PC-3 (cell line): ENCODE measurements at regions of chr1 and their contacts with region 1.

Region 1: GRCh38 chr1:12434174-12434573 is 183.8 kb downstream of the DHRS3 start:
- DNase-seq: peak; percentile 76
- ATAC-seq: peak; percentile 84
- H3K4me3 ChIP-seq: no peak overlapping the region
- H3K27ac ChIP-seq: peak overlapping the region; percentile 39
- H3K4me1 ChIP-seq: peaks cover 59% of the 10 kb centered on the region
- H3K27me3 ChIP-seq: no peaks in the 10 kb centered on the region
- CTCF ChIP-seq: no peak

Region 2: DNA sequence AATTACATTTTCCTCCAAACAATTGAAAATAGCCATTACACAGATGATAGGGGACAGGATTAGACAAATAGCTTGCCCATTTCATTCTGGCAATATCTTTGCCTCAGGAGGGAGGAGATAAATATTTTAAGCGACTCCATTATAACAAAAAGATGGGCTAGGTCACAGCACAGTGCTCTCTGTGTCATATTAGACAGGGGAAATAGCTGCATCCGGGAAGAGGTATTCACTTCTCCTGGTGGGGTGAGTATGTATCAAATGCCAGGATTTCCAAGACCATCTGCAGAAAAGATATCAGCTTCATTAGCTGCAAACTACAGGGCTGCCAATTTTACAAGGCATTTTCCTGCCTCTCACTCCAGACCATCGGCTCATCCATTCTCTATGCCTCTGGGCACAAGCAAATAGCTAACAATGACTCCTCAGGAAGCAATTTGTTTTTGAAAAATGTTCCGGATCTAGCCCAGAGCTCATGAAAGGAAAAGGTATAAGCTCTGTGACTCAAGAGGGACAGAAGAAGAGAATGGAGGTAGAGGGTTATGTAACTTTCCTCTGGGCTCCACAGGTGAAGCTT is 1286.9 kb before region 1 on chr1:
- CTCF ChIA-PET with region 1: interaction called, 14 read pairs
- POLR2A ChIA-PET with region 1: no interaction called
- intact Hi-C with region 1: no loop called
- DNase-seq: peak; percentile 93
- ATAC-seq: peak; percentile 92
- H3K4me3 ChIP-seq: no peak overlapping the region
- H3K27ac ChIP-seq: peak overlapping the region; percentile 84
- H3K4me1 ChIP-seq: peaks cover 41% of the 10 kb centered on the region
- H3K27me3 ChIP-seq: no peaks in the 10 kb centered on the region
- CTCF ChIP-seq: no peak

Region 3: DNA sequence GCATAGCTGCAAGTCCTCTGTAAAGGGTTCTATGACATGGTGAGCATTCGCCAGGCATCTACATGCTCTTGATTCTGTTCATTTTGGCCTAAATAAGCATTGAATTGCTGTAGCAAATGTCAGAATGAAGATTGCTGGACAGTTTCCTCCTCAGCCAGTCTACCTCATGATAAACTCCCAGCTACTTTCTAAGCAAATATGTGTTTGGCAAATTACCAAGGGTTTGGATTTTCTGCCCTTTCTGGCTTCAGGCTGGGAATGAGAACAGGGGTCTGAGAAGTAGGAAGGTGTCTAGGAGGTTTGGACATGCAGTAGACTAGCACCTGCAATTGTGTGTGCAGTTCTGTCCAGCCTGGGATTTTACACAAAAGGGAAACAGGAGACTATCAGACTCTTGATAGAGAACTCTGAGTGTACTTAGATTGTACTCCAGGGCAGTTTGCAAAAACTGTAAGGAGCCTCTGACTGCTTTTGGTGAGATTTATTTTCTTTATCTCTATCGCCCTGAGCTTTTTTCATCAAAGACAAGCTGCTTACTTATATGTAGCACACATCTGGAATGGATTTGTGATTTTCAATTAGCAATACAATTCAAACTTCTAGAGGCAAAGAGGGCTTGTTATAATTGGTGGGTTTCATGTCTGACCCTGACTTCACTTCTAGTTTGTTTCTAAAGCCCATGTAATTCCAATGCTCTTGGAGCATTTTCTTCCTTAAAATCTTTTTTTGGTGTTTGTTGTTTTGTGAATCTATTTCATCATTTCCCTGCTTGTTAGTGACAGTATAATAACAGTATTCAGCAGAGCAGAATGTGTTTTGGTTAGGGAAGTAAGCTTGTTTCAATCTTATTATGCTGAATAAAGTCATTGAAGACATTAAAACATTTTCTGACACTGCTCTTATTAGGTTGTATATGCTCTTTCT is 53.6 kb before region 1 on chr1:
- CTCF ChIA-PET with region 1: interaction called, 3 read pairs
- POLR2A ChIA-PET with region 1: no interaction called
- intact Hi-C with region 1: loop called (anchors 2 kb)
- DNase-seq: peak; percentile 61
- ATAC-seq: peak; percentile 27
- H3K4me3 ChIP-seq: peak overlapping the region; percentile 39
- H3K27ac ChIP-seq: peak overlapping the region; percentile 99
- H3K4me1 ChIP-seq: peaks cover 54% of the 10 kb centered on the region
- H3K27me3 ChIP-seq: no peaks in the 10 kb centered on the region
- CTCF ChIP-seq: no peak

Region 4: GRCh38 chr1:12400027-12400693 is 34.0 kb before region 1 on chr1:
- CTCF ChIA-PET with region 1: no interaction called
- POLR2A ChIA-PET with region 1: no interaction called
- intact Hi-C with region 1: no loop called
- DNase-seq: no peak
- ATAC-seq: no peak
- H3K4me3 ChIP-seq: no peak overlapping the region
- H3K27ac ChIP-seq: no peak overlapping the region
- H3K4me1 ChIP-seq: peaks cover 15% of the 10 kb centered on the region
- H3K27me3 ChIP-seq: no peaks in the 10 kb centered on the region
- CTCF ChIP-seq: no peak

Region 5: DNA sequence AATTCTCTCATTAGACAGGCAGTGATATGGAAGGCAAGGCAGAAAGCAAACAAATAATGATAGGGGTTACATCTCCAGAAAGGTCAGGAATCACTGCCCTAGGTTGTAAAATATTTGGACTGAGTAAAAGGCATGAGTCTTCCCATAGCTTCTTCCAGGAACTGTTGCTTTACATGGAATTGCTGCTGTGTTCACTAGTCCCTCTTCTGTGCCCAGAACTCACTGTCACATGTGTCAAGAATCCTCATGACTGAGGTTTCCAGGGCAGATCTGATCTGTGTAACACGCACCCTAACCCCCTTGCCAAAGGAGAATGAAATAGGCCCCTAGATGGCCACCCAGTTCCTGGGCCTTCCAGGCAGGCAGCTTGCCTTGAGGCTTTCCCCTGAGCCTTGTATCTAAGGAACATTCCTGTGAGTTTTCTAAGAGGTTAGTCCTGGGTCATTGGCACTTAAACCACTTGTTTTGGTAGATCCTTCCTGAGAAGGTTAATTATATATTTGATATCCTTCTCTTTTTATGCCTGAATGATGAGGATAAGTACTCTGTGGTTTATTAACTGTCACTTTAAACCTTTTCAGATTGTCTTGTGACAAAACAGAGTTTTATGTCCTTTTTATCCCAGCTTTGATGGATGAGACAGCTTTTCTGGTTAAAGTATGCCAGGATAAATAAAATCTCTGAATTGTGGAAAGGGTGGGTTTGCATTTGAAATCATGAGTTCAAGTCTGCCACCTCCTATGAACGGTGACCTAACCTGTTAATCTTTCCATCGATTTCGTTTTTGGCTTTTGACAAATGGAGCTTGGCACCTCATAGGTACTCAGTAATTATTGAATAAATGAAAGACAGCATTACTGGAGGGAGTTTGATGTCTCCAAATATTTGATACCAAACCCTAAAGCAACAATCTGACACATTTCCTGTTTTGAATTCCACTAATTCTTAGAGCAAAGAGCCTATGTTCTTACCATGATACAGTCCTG is 20.5 kb after region 1 on chr1:
- CTCF ChIA-PET with region 1: no interaction called
- POLR2A ChIA-PET with region 1: no interaction called
- intact Hi-C with region 1: loop called (anchors 2 kb)
- DNase-seq: peak; percentile 57
- ATAC-seq: peak; percentile 39
- H3K4me3 ChIP-seq: no peak overlapping the region
- H3K27ac ChIP-seq: no peak overlapping the region
- H3K4me1 ChIP-seq: peaks cover 50% of the 10 kb centered on the region
- H3K27me3 ChIP-seq: no peaks in the 10 kb centered on the region
- CTCF ChIP-seq: no peak

Region 6: DNA sequence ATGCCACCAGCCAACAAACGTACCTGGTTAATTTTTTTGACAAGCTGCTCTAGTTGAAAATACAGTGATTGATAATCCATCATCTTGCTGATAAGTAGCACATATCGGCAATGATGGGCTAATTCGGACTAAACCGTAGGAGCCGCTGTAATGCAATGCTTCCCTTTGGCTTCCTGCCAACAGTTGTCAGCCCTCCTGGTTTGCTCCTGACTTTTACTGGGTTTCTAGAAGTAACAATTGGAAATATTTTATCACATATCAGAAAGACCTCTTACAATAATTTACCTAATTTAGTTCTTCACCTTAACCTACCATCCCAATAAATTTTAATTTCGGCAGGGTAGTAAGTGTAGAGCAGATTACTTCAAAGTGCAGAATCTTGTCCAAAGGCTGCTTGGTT is 35.3 kb after region 1 on chr1:
- CTCF ChIA-PET with region 1: no interaction called
- POLR2A ChIA-PET with region 1: no interaction called
- intact Hi-C with region 1: no loop called
- DNase-seq: no peak
- ATAC-seq: no peak
- H3K4me3 ChIP-seq: no peak overlapping the region
- H3K27ac ChIP-seq: no peak overlapping the region
- H3K4me1 ChIP-seq: peaks cover 12% of the 10 kb centered on the region
- H3K27me3 ChIP-seq: no peaks in the 10 kb centered on the region
- CTCF ChIP-seq: no peak